ENCODE measurements at regions of chr21 and their contacts with region 1.

Region 1: GRCh38 chr21:26170471-26171257 is at the start of gene APP:
- DNase-seq: no peak
- ATAC-seq: peak; percentile 80
- H3K4me3 ChIP-seq: peak within 1 kb of the TSS; percentile 84
- H3K27ac ChIP-seq: peak within 1 kb of the TSS; percentile 57
- H3K4me1 ChIP-seq: no peaks in the 10 kb centered on the region
- H3K27me3 ChIP-seq: no peaks in the 10 kb centered on the region
- CTCF ChIP-seq: peak; percentile 73 to 80 (median 79)
- EP300 ChIP-seq: no peak
- POLR2A ChIP-seq: peak; percentile 95
- RAD21 ChIP-seq: peak; percentile 76
- polyA plus RNA-seq, gene APP: 8.8 to 15.4 TPM

Region 2: DNA sequence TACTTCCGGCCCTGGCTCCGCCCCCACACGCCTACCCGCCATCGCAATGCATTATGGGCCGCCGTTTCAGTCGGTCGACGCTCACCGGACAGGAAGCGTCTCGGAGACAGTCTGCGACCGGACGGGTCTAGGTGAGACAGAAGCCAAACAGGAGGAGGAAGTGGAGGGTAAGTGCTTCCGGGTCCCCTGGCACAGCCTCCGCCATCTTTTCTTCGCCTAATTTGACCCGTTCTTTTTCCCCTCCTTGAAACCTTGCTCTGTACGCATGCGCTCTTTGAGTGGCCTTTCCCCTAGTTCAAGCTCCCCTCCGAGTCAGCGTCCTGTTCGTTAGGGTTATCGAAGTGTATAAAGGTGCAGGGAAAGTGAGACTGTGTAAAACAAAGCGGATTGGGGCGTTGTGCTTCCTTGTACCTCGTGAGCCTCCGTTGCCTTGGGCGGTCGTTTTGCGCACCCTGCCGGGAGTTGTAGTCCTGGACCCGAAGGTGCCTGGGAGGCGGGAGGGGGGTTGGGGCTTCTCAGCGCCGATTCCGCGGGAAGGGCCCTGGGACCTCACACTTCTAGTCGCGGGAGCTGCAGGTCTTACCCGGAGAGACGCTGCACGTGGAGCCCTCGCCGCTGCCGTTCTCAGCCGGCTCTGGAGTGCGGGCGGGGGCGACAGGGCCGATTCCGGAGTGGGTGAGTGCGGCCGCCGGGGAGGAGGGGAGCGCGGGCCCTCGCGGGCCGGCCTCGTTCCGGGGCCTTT is 435.6 kb before region 1 on chr21 and contains the starts of genes ATP5PF and GABPA:
- CTCF ChIA-PET with region 1: no interaction called
- POLR2A ChIA-PET with region 1: no interaction called
- RAD21 ChIA-PET with region 1: no interaction called
- SMC1A ChIA-PET with region 1: no interaction called
- in situ Hi-C with region 1: no loop called
- intact Hi-C with region 1: loop called (anchors 10 kb)
- DNase-seq: peak; percentile 97
- ATAC-seq: peak; percentile 90
- H3K4me3 ChIP-seq: peak within 1 kb of the TSS; percentile 98
- H3K27ac ChIP-seq: peak within 1 kb of the TSS; percentile 97
- H3K4me1 ChIP-seq: peaks cover 26% of the 10 kb centered on the region
- H3K27me3 ChIP-seq: no peaks in the 10 kb centered on the region
- CTCF ChIP-seq: no peak
- EP300 ChIP-seq: peak in 1 of 2 experiments; percentile 41; a peak in 1 of 4 replicates
- POLR2A ChIP-seq: peak; percentile 72
- RAD21 ChIP-seq: no peak
- polyA plus RNA-seq, gene ATP5PF: 1,189 to 1,604 TPM
- polyA plus RNA-seq, gene GABPA: 7.6 to 8.4 TPM

Region 3: DNA sequence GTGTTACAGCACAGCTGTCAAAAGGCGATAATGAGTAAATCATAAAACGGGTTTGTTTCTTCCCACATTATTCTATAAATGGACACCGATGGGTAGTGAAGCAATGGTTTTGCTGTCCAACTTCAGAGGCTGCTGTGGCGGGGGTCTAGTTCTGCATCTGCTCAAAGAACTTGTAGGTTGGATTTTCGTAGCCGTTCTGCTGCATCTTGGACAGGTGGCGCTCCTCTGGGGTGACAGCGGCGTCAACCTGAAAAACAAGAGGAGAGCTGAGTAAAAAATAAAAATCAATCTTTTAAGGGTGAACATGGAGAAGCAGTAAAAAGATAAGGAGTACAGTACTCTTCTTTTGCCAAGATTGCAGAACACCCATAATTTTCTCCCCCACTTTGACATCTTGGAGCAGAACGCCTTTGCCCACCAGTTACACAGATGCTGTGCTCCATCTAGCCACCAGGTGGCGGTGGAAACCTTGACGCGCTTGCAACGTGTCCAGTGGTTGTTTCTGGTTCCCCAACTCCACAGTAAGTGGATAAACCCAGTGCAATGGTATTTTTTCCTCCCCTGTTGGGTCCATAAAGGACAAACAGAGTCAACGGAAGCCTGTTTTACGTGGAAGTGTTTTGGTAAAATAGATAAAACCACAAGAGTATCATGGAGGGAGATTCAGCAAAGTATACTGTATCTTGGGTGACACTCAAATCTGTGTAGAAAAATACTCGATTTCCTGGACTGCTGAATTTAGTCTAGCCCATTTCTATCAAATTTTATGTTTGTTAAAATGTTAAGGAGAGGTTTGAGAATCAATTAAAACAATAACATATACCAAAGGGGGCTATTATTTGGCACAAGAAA is 288.9 kb before region 1 on chr21:
- CTCF ChIA-PET with region 1: interaction called, 11 read pairs
- POLR2A ChIA-PET with region 1: no interaction called
- RAD21 ChIA-PET with region 1: interaction called, 4 read pairs
- SMC1A ChIA-PET with region 1: no interaction called
- in situ Hi-C with region 1: no loop called
- intact Hi-C with region 1: loop called (anchors 1 kb)
- DNase-seq: peak; percentile 9
- ATAC-seq: peak; percentile 95
- H3K4me3 ChIP-seq: no peak overlapping the region
- H3K27ac ChIP-seq: no peak overlapping the region
- H3K4me1 ChIP-seq: no peaks in the 10 kb centered on the region
- H3K27me3 ChIP-seq: no peaks in the 10 kb centered on the region
- CTCF ChIP-seq: peak; percentile 77 to 97 (median 96)
- EP300 ChIP-seq: no peak
- POLR2A ChIP-seq: no peak
- RAD21 ChIP-seq: peak; percentile 89

Region 4: GRCh38 chr21:25887166-25887565 is 283.5 kb before region 1 on chr21:
- CTCF ChIA-PET with region 1: interaction called, 3 read pairs
- POLR2A ChIA-PET with region 1: no interaction called
- RAD21 ChIA-PET with region 1: no interaction called
- SMC1A ChIA-PET with region 1: interaction called, 4 read pairs
- in situ Hi-C with region 1: loop called (anchors 5 kb)
- intact Hi-C with region 1: loop called (anchors 1 kb)
- DNase-seq: no peak
- ATAC-seq: no peak
- H3K4me3 ChIP-seq: no peak overlapping the region
- H3K27ac ChIP-seq: no peak overlapping the region
- H3K4me1 ChIP-seq: no peaks in the 10 kb centered on the region
- H3K27me3 ChIP-seq: no peaks in the 10 kb centered on the region
- CTCF ChIP-seq: 0 out of 6 replicates have a peak, but pooled peaks of 1 of the 3 experiments have one; percentile 8
- EP300 ChIP-seq: no peak
- POLR2A ChIP-seq: no peak
- RAD21 ChIP-seq: no peak

Region 5: GRCh38 chr21:25895565-25896205 is 275.0 kb before region 1 on chr21:
- CTCF ChIA-PET with region 1: interaction called, 25 read pairs
- POLR2A ChIA-PET with region 1: no interaction called
- RAD21 ChIA-PET with region 1: interaction called, 6 read pairs
- SMC1A ChIA-PET with region 1: interaction called, 3 read pairs
- in situ Hi-C with region 1: loop called (anchors 5 kb)
- intact Hi-C with region 1: loop called (anchors 5 kb)
- DNase-seq: no peak
- ATAC-seq: peak; percentile 73
- H3K4me3 ChIP-seq: no peak overlapping the region
- H3K27ac ChIP-seq: no peak overlapping the region
- H3K4me1 ChIP-seq: no peaks in the 10 kb centered on the region
- H3K27me3 ChIP-seq: no peaks in the 10 kb centered on the region
- CTCF ChIP-seq: peak; percentile 26 to 43 (median 42); a peak in 4 of 6 replicates
- EP300 ChIP-seq: no peak
- POLR2A ChIP-seq: no peak
- RAD21 ChIP-seq: peak; percentile 77

Region 6: DNA sequence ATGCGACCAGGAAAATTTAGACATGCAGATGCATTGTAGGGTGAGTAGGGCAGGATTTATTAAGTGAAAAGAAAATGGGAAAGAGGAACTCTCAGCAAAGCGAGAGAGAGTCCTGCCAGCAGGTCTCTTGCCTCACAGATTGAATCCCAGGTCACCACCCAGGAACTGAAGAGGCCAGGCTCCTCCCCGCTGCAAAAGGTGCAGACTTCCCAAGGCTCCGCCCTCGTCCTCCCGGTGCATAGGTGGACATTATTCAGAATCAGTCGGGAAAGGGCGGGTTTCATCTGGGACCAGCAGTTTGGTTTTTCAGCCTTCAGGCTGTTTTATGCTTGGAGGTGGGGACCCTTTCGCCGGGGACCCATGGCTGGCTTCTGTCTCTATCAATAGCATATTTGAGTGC is 41.5 kb after region 1 on chr21:
- CTCF ChIA-PET with region 1: no interaction called
- POLR2A ChIA-PET with region 1: no interaction called
- RAD21 ChIA-PET with region 1: no interaction called
- SMC1A ChIA-PET with region 1: no interaction called
- in situ Hi-C with region 1: no loop called
- intact Hi-C with region 1: no loop called
- DNase-seq: no peak
- ATAC-seq: no peak
- H3K4me3 ChIP-seq: no peak overlapping the region
- H3K27ac ChIP-seq: no peak overlapping the region
- H3K4me1 ChIP-seq: no peaks in the 10 kb centered on the region
- H3K27me3 ChIP-seq: no peaks in the 10 kb centered on the region
- CTCF ChIP-seq: no peak
- EP300 ChIP-seq: no peak
- POLR2A ChIP-seq: no peak
- RAD21 ChIP-seq: no peak